T-cell (primary cell): ENCODE measurements at regions of chr17 and their contacts with region 1.

Region 1: GRCh38 chr17:43483674-43484372 is at the start of gene DHX8:
- DNase-seq: peak; percentile 92 to 100 (median 98)
- ATAC-seq: peak; percentile 95 to 99 (median 96)
- H3K4me3 ChIP-seq: peak within 1 kb of the TSS; percentile 85 to 96
- H3K4me3 Mint-ChIP-seq: peak within 1 kb of the TSS; percentile 100
- H3K27ac ChIP-seq: peak within 1 kb of the TSS; percentile 70
- H3K27ac Mint-ChIP-seq: peak within 1 kb of the TSS; percentile 99
- H3K4me1 ChIP-seq: peaks cover 15 to 24% of the 10 kb centered on the region in 2 experiments
- H3K4me1 Mint-ChIP-seq: peaks cover 25 to 41% (median 39%) of the 10 kb centered on the region in 3 donors
- H3K27me3 ChIP-seq: no peaks in the 10 kb centered on the region
- H3K27me3 Mint-ChIP-seq: no peaks in the 10 kb centered on the region
- total RNA-seq, gene DHX8: 68.9 to 103 (median 76.1) TPM

Region 2: DNA sequence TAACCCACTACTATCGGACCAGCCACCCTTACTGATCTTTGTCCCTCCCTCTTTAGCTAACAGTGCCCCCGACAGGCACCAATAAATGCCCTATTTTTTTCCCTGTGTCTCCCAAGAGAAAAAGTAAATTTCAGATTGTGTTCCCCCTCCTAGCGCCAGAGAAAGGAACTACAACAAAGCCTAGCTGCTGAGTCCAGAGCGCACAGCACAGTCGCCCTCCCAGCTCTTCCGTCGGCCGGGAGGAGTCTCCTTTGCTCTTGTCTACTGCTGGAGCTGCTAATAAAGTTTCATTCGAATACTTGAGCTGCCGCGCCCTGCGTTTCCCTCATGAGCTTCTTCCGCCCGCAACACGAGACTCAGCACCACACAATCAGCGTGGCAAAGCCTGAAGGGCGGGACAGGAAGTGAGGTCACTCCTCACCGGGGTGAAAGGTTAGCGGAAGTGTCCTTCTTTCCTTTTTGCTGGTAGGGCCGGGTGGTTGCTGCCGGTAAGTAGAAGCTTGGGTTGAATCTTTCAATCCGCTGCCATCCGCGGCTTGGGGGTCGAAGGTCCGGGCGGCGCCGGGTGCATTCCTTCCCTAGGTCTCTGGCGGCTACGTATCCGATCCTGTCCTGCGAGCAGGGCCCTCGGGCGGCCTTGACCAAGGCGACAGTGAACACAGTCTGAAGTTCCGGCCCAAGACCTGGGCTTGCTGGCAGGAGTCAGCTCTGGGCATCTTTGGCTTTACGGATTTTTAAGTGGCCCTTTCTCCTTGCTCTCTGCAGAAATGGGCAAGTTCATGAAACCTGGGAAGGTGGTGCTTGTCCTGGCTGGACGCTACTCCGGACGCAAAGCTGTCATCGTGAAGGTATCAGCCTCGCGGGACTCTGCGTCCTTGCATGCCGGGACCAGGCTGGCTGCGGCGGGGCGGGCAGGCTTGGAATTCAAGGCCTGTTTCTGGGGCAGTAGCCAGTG is 485.6 kb before region 1 on chr17 and contains the start of gene RPL27:
- CTCF ChIA-PET with region 1: interaction called in 1 of 2 experiments, 18 read pairs
- POLR2A ChIA-PET with region 1: interaction called in 1 of 2 experiments, 5 read pairs
- DNase-seq: peak; percentile 94 to 100 (median 98)
- ATAC-seq: peak; percentile 94 to 97 (median 95)
- H3K4me3 ChIP-seq: peak within 1 kb of the TSS; percentile 72 to 80
- H3K4me3 Mint-ChIP-seq: peak within 1 kb of the TSS; percentile 90 to 97 (median 92)
- H3K27ac ChIP-seq: peak within 1 kb of the TSS; percentile 94
- H3K27ac Mint-ChIP-seq: peak within 1 kb of the TSS; percentile 88 to 98
- H3K4me1 ChIP-seq: peaks cover 3 to 27% of the 10 kb centered on the region in 2 experiments
- H3K4me1 Mint-ChIP-seq: peaks cover 24 to 30% (median 26%) of the 10 kb centered on the region in 3 donors
- H3K27me3 ChIP-seq: no peaks in the 10 kb centered on the region
- H3K27me3 Mint-ChIP-seq: no peaks in the 10 kb centered on the region
- total RNA-seq, gene RPL27: 1,254 to 1,790 (median 1,710) TPM

Region 3: DNA sequence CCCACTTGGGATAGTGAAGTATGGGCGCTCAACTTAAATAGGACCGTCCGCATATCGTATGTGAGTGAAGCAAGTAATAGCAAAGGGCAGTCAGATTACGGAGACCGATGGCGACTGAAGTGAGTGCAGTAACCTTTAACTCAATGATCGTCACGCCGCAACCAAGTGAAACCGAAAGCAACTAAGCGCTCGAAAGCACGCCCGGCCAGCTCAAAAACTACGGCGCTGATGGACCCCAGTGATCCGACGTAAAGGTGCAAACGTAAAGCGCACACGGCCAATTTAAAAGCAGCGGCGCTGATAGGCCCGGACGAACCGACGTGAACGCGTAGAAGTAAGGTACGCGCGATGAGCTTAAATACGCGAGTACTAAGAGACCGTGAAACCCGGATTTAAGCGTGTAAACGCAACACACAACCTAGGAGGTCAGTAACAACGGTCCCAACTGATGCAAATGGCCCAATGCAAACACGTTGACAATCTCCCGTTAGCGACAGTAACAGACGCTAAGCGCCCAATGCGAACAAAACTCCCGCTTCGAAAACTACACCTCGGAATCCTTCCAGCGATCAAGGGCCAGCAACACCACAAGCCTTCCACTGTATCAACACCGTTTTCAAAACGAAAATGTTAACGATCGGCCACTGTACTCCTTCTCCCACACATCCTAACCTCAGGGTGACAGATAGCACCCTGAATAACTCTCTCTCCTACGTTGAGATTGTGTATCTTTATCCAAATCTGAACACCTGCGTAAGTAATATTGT is 122.9 kb before region 1 on chr17:
- CTCF ChIA-PET with region 1: interaction called in 1 of 2 experiments, 19 read pairs
- POLR2A ChIA-PET with region 1: interaction called, 5 to 34 read pairs
- DNase-seq: peak; percentile 80 to 99 (median 93)
- ATAC-seq: peak; percentile 69 to 86 (median 83)
- H3K4me3 ChIP-seq: peak overlapping the region; percentile 58 to 61
- H3K4me3 Mint-ChIP-seq: peak overlapping the region; percentile 80 to 94 (median 92)
- H3K27ac ChIP-seq: peak overlapping the region; percentile 89
- H3K27ac Mint-ChIP-seq: peak overlapping the region; percentile 100
- H3K4me1 ChIP-seq: peaks cover 10 to 13% of the 10 kb centered on the region in 2 experiments
- H3K4me1 Mint-ChIP-seq: peaks cover 20 to 48% (median 43%) of the 10 kb centered on the region in 3 donors
- H3K27me3 ChIP-seq: no peaks in the 10 kb centered on the region
- H3K27me3 Mint-ChIP-seq: peaks cover 4 to 6% of the 10 kb centered on the region in 2 donors

Region 4: DNA sequence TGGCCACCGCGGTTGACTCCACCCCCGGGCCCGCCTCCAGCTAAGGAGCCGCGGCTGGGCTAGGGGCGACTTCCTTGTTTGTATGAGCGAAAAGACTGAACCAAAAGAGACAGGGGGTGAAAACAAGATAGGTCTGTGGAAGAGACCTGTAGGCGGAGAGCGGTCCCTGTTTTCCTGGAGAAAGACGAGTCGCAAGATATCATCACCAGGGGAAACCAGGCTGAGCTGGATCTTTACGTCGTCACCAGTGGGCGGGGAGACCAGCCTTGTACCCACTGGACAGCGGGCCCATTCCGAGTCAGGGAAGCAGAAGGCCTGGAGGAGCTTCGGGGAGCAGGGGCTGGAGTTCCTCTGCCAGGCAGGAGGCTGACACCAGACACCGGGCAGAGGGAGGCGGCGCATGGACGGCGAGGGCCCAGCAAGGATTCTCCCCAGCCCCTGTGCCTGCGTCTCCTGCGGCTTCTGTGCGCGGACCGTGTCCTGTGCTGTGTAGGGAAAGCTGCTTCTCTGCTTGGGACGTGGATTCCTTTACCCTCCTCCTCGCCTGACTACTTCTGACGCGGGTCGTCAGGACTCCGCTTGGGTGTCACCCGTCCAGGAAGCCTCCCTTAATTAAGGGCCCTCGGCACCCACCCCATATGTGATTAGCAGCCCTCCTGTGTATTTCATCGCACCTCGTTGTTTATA is 95.3 kb before region 1 on chr17:
- CTCF ChIA-PET with region 1: interaction called, 4 to 48 read pairs
- POLR2A ChIA-PET with region 1: interaction called, 6 read pairs
- DNase-seq: peak; percentile 85 to 94 (median 89)
- ATAC-seq: peak; percentile 73 to 80 (median 78)
- H3K4me3 ChIP-seq: peak overlapping the region; percentile 89 to 92
- H3K4me3 Mint-ChIP-seq: peak overlapping the region; percentile 90 to 94 (median 93)
- H3K27ac ChIP-seq: peak overlapping the region; percentile 99
- H3K27ac Mint-ChIP-seq: peak overlapping the region; percentile 96 to 97
- H3K4me1 ChIP-seq: peaks cover 6 to 26% of the 10 kb centered on the region in 2 experiments
- H3K4me1 Mint-ChIP-seq: peaks cover 20 to 35% (median 28%) of the 10 kb centered on the region in 3 donors
- H3K27me3 ChIP-seq: no peaks in the 10 kb centered on the region
- H3K27me3 Mint-ChIP-seq: no peaks in the 10 kb centered on the region

Region 5: GRCh38 chr17:45235416-45236281 is 1751.8 kb after region 1 on chr17:
- CTCF ChIA-PET with region 1: interaction called in 1 of 2 experiments, 14 read pairs
- POLR2A ChIA-PET with region 1: no interaction called
- DNase-seq: peak in 34 of 35 experiments; percentile 54 to 93 (median 76)
- ATAC-seq: peak; percentile 28 to 66 (median 66)
- H3K4me3 ChIP-seq: no peak overlapping the region
- H3K4me3 Mint-ChIP-seq: no peak overlapping the region
- H3K27ac ChIP-seq: peak overlapping the region; percentile 46
- H3K27ac Mint-ChIP-seq: peak overlapping the region; percentile 86 to 99
- H3K4me1 ChIP-seq: peaks cover 17 to 62% of the 10 kb centered on the region in 2 experiments
- H3K4me1 Mint-ChIP-seq: peaks cover 64 to 68% (median 65%) of the 10 kb centered on the region in 3 donors
- H3K27me3 ChIP-seq: no peaks in the 10 kb centered on the region
- H3K27me3 Mint-ChIP-seq: no peaks in the 10 kb centered on the region